SK-N-SH (cell line): ENCODE measurements at regions of chr1 and their contacts with region 1.

Region 1: GRCh38 chr1:245156081-245156735 is 1.4 kb downstream of the KIF26B start:
- DNase-seq: peak; percentile 93
- H3K4me3 ChIP-seq: peak overlapping the region; percentile 84 to 99
- H3K27ac ChIP-seq: peak overlapping the region; percentile 68 to 98; a peak in 3 of 4 replicates
- H3K4me1 ChIP-seq: peaks cover 0 to 41% of the 10 kb centered on the region in 2 experiments; a peak in 2 of 4 replicates
- H3K27me3 ChIP-seq: no peaks in the 10 kb centered on the region
- CTCF ChIP-seq: peak; percentile 63
- EP300 ChIP-seq: peak in 1 of 2 experiments; percentile 10; a peak in 1 of 4 replicates
- RAD21 ChIP-seq: peak; percentile 74

Region 2: GRCh38 chr1:245142171-245142798 is 13.9 kb before region 1 on chr1:
- CTCF ChIA-PET with region 1: interaction called, 35 read pairs
- POLR2A ChIA-PET with region 1: no interaction called
- DNase-seq: no peak
- H3K4me3 ChIP-seq: no peak overlapping the region
- H3K27ac ChIP-seq: no peak overlapping the region
- H3K4me1 ChIP-seq: no peaks in the 10 kb centered on the region
- H3K27me3 ChIP-seq: no peaks in the 10 kb centered on the region; the same call in 1 of the 2 replicates
- CTCF ChIP-seq: no peak
- EP300 ChIP-seq: no peak
- RAD21 ChIP-seq: no peak

Region 3: DNA sequence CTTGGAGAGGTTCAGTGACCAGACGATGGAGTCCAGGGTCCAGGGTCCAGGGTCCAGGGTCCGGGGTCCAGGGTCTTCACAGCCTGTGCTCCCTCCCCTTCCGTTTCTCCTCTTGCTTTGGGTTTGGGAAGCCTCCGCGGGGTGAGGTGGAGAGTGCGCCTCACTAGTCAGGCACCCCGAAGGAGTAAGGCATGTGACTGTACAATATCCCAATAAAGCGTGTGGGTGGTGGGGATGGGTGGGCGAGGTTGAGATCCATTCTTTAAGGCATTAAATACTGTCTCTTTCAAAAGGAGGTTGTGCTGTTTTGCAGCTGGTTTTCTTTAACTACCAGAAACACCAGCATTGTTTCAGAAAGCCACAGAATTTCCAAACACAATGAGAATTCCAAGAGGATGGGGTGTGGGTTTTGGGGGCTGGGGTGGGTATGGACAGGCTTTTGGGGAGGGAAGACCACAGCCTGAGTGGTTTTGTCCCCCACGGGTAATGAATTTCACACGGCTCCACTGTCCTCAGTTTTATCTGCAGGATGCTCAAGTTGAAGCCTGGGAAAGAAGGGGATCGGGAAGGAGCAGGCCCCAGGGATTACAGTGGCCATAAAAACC is 64.3 kb after region 1 on chr1:
- CTCF ChIA-PET with region 1: interaction called, 10 read pairs
- POLR2A ChIA-PET with region 1: interaction called, 4 read pairs
- DNase-seq: no peak
- H3K4me3 ChIP-seq: no peak overlapping the region
- H3K27ac ChIP-seq: no peak overlapping the region; a peak in 1 of 4 replicates
- H3K4me1 ChIP-seq: peaks cover 0 to 35% of the 10 kb centered on the region in 2 experiments; a peak in 3 of 4 replicates
- H3K27me3 ChIP-seq: no peaks in the 10 kb centered on the region
- CTCF ChIP-seq: no peak
- EP300 ChIP-seq: no peak
- RAD21 ChIP-seq: no peak

Region 4: DNA sequence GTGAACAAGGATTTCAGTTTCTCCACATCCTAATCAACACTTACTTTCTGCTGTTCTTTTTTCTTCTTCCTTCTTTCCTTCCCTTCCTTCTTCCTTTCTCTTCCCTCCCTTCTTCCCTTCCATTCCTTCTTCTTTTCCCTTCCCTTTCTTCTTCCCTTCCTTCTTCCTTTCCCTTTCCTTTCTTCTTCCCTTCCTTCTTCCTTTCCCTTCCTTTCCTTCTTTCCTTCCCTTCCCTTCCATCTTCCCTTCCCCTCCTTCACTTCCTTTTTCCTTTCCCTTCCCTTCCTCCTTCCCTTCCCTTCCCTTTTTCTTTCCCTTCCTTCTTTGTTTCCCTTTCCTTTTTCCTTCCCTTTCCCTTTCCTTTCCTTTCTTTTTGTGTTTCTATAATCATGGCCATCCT is 113.9 kb after region 1 on chr1:
- CTCF ChIA-PET with region 1: no interaction called
- POLR2A ChIA-PET with region 1: no interaction called
- DNase-seq: no peak
- H3K4me3 ChIP-seq: no peak overlapping the region
- H3K27ac ChIP-seq: no peak overlapping the region
- H3K4me1 ChIP-seq: no peaks in the 10 kb centered on the region
- H3K27me3 ChIP-seq: no peaks in the 10 kb centered on the region
- CTCF ChIP-seq: no peak
- EP300 ChIP-seq: no peak
- RAD21 ChIP-seq: no peak

Region 5: GRCh38 chr1:245404527-245404926 is 248.3 kb after region 1 on chr1:
- CTCF ChIA-PET with region 1: interaction called, 18 read pairs
- POLR2A ChIA-PET with region 1: no interaction called
- DNase-seq: no peak
- H3K4me3 ChIP-seq: no peak overlapping the region
- H3K27ac ChIP-seq: peak overlapping the region in 1 of 2 experiments; percentile 93; a peak in 2 of 4 replicates
- H3K4me1 ChIP-seq: peaks cover 0 to 56% of the 10 kb centered on the region in 2 experiments; a peak in 2 of 4 replicates
- H3K27me3 ChIP-seq: no peaks in the 10 kb centered on the region
- CTCF ChIP-seq: no peak
- EP300 ChIP-seq: no peak
- RAD21 ChIP-seq: no peak

Region 6: GRCh38 chr1:245605480-245606161 is 449.4 kb after region 1 on chr1:
- CTCF ChIA-PET with region 1: interaction called, 6 read pairs
- POLR2A ChIA-PET with region 1: interaction called, 13 read pairs
- DNase-seq: peak; percentile 91
- H3K4me3 ChIP-seq: no peak overlapping the region; a peak in 2 of 4 replicates
- H3K27ac ChIP-seq: peak overlapping the region; percentile 71 to 100
- H3K4me1 ChIP-seq: peaks cover 12 to 78% of the 10 kb centered on the region in 2 experiments; a peak in 3 of 4 replicates
- H3K27me3 ChIP-seq: no peaks in the 10 kb centered on the region
- CTCF ChIP-seq: no peak
- EP300 ChIP-seq: peak; percentile 88 to 89
- RAD21 ChIP-seq: peak; percentile 49

Region 7: GRCh38 chr1:245858722-245859492 is 702.7 kb after region 1 on chr1:
- CTCF ChIA-PET with region 1: interaction called, 19 read pairs
- POLR2A ChIA-PET with region 1: no interaction called
- DNase-seq: peak; percentile 49
- H3K4me3 ChIP-seq: no peak overlapping the region
- H3K27ac ChIP-seq: peak overlapping the region; percentile 98 to 100
- H3K4me1 ChIP-seq: peaks cover 34 to 52% of the 10 kb centered on the region in 2 experiments
- H3K27me3 ChIP-seq: no peaks in the 10 kb centered on the region
- CTCF ChIP-seq: peak; percentile 67
- EP300 ChIP-seq: no peak
- RAD21 ChIP-seq: peak; percentile 74

Region 8: GRCh38 chr1:246012341-246012740 is 856.1 kb after region 1 on chr1:
- CTCF ChIA-PET with region 1: interaction called, 24 read pairs
- POLR2A ChIA-PET with region 1: no interaction called
- DNase-seq: peak; percentile 58
- H3K4me3 ChIP-seq: no peak overlapping the region
- H3K27ac ChIP-seq: no peak overlapping the region
- H3K4me1 ChIP-seq: no peaks in the 10 kb centered on the region
- H3K27me3 ChIP-seq: no peaks in the 10 kb centered on the region
- CTCF ChIP-seq: peak; percentile 68
- EP300 ChIP-seq: no peak
- RAD21 ChIP-seq: peak; percentile 87